PC-3 (cell line): ENCODE measurements at regions of chr5 and their contacts with region 1.

Region 1: DNA sequence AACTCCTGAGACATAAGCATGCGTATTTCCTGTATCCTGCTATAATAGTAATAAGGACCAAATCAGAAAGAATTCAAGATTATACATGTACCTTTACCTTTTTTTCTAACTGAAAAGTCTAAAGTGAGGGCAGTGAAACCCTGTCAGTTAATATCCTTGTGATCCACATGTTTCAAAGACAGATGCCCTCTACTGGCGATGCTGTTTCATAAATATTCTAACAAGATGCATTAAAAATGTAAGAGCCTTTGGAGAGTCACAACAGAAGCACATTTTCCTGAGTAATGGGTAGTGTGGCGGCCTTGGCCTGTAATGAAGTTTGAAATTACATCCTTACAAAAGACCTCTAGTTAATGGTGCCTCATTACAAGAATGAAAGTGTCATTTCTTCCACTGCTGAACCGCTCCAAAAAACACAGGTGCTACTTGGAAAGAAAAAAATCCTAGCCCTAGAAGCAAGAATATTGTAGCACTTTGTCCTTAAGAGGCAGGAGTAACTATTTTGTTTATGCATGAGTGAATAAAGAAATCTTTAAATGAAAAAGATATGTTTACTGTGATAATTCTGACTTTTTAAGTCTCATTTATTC is 232.6 kb downstream of the EPB41L4A start:
- DNase-seq: peak; percentile 66
- ATAC-seq: peak; percentile 74
- H3K4me3 ChIP-seq: no peak overlapping the region
- H3K27ac ChIP-seq: no peak overlapping the region
- H3K4me1 ChIP-seq: no peaks in the 10 kb centered on the region
- H3K27me3 ChIP-seq: peaks cover 83% of the 10 kb centered on the region
- CTCF ChIP-seq: peak; percentile 80

Region 2: DNA sequence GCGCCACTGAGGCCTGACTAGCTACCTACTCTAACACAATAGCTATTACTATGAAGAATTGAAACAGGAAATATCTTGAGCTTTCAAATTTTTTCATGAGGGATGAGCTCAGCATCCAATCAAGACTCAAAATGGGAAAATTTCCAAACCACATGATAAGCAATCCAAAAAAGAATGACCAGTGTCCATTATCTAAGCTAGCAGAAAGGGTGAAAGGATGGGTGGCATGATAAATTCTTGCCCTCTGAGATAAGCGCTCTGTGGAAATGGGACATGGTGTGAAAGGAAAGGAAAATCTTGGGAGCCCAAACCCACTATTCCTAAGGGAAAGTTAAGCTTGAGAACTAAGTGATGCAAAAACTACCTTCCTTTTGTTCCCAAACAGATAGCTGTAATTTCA is 259.3 kb before region 1 on chr5:
- CTCF ChIA-PET with region 1: no interaction called
- POLR2A ChIA-PET with region 1: interaction called, 11 read pairs
- intact Hi-C with region 1: no loop called
- DNase-seq: no peak
- ATAC-seq: no peak
- H3K4me3 ChIP-seq: no peak overlapping the region
- H3K27ac ChIP-seq: no peak overlapping the region
- H3K4me1 ChIP-seq: peaks cover 26% of the 10 kb centered on the region
- H3K27me3 ChIP-seq: no peaks in the 10 kb centered on the region
- CTCF ChIP-seq: no peak

Region 3: DNA sequence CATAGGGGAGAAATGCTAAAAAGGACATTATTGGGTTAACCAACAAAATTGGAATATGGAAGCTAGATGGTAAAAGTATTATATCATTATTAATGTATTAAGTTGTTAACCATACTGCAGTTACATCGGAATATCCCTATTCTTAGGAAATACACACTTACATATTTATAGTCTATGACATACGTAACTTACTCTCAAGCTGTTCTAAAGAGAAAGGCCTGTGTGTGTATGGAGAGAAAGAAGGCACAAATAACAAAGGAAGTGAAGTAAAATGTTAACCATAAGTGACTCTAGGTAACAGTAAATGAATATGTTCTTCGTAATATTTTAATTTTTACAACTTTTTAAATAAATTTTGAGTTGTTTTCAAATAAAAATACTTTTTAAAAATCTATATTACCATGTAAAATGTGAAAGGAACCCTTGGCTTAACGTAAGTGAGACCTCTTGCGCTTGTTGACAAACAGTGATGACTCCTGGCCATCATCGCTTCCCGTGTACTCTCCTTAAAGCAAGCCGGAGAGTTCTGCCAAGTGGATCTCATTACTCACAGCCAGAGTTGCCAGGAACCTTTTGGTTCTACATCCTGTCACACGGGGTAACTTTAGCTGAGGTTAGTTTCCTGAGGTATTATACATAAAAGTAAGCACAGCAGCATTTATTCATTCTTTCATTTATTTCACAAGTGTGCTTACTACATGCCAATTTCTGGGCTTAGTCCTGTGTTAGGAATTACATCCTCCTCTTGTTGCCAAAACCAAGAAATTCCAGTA is 67.2 kb after region 1 on chr5:
- CTCF ChIA-PET with region 1: no interaction called
- POLR2A ChIA-PET with region 1: no interaction called
- intact Hi-C with region 1: no loop called
- DNase-seq: peak; percentile 50
- ATAC-seq: peak; percentile 51; the same call in 1 of the 2 replicates
- H3K4me3 ChIP-seq: no peak overlapping the region
- H3K27ac ChIP-seq: no peak overlapping the region
- H3K4me1 ChIP-seq: no peaks in the 10 kb centered on the region
- H3K27me3 ChIP-seq: peaks cover 74% of the 10 kb centered on the region
- CTCF ChIP-seq: no peak